Right ventricle myocardium inferior (tissue), 1 donor: ENCODE measurements at regions of chr15 and their contacts with region 1.

Region 1: GRCh38 chr15:68578174-68578979 is 416 bp upstream of the CORO2B start:
- DNase-seq: peak; percentile 88
- ATAC-seq: peak; percentile 83

Region 2: DNA sequence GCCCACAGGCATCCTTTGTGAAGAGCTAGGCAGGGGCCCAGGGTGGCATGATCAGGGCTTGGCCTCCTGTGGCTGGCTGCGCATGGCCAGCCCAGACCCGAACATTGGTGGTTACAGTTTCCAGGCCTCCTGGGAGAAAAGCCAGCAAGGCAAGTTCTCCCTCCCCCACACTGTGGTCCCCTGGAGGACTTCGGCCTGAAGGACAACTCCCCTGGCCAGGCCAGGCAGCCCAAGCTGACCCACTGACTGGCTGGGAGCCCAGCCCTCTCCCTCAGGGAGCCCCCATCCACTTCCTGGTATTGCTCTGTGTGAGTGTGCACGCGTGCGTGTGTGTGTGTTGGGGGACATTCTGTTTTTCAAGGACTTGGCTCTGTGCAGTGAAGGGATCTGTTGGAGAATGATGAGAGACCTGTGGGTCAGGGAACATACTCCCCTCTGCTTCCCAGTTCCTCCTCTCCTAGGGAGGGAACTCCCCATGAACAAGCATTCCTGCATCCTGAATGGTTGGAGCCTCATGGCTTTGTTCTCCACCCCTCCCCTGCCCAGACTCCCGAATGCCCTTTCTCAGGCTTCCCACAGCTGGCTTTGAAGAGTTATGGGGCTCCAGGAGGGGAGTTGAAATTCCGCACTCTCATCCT is 29.9 kb after region 1 on chr15:
- intact Hi-C with region 1: loop called (anchors 2 kb)
- DNase-seq: peak; percentile 96
- ATAC-seq: peak; percentile 86

Region 3: DNA sequence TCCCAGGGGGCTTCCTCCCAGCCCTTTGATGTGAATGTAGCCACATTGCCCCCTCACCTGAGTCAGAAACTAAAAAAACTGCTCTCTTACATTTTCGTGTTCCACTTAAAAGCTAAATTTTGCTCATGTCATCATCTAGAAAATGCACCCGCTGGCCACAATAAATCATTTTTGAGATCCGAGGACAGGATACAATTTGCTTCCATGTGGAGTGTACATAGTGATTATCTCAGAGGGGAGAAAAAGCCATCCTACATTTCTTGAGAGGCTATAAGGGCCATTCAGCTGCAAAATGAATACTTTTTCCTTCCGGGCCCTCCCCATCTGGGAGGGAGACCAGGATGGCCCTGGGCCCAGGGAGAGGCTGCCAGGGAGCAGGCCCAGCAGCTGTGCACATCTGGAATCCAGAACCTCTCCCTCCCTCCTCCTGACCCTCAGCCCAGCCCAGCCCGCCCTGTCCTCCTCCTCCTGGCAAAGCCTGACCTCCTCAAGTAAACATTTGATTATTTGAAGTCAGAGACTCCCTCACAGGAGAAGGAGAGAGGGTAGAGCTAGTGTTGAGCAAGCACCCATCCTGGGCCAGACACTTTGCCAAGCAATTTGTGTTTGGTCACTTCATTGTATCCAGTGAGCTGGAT is 59.5 kb after region 1 on chr15:
- intact Hi-C with region 1: loop called (anchors 5 kb)
- DNase-seq: peak; percentile 81
- ATAC-seq: peak; percentile 85

Region 4: DNA sequence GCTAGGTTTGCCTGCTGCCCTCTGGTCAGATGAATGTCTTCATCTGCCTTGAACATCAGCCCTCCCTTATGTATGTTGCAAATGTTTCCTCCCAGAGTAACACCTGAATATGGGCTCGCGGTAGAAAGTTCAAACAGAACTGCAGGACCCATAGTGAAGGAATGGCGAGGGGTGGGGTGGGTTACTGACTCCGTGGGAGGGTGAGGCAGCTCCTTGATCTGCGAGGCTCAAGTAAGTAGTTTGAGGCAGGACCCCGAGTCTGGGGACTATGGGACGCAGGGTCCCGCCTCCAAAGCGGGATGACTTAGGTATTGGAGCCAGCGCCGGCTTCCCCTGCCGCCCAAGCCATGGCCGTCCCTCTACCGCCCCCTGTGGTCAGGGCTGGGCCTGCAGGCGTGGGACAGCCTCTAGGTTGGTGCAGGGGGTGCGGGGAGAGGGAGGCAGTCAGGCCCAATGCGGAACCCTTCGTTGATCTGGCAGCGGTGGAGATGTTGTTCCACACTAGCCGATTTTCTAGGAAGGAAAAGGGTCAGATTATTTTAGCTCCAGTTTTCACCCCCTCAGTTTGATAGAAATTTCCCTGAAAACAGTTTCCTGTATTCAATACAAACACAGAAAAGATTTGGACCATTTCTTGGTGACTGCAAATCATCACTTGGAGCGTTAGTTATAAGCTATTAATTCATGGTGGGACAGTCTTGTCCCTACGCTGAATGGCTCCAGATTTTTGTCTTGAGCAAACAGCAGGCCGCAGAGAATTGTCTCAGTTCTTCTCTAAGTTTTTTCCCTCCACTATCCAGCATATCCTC is 72.7 kb after region 1 on chr15:
- intact Hi-C with region 1: loop called (anchors 5 kb)
- DNase-seq: no peak
- ATAC-seq: no peak

Region 5: DNA sequence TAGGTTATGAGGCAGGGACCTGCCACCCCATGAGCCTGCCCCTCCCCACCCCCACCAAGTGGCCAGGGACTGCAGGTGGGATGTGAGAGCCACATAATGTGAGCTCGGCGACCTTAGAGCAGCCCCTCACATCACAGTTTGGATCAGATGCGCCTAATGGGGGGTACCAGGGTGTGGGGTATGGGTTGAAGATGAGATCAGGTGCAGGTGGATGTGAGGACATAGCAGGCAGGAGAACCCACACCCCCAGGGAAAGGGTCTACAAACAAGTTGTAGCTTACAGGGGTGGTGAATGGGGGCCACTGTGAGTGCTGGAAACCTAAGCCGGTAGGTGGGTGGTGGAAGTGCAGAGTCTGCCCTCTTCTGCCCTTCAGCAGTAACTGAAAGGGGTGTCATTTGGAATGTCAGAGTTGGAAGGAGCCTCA is 94.4 kb after region 1 on chr15:
- intact Hi-C with region 1: loop called (anchors 1 kb)
- DNase-seq: no peak
- ATAC-seq: no peak